ENCODE measurements at regions of chr6 and their contacts with region 1.

Region 1: GRCh38 chr6:159042003-159042825 is 2.6 kb downstream of the TAGAP start:
- DNase-seq: peak; percentile 84
- ATAC-seq: peak; percentile 39
- H3K4me3 Mint-ChIP-seq: peak overlapping the region; percentile 87
- H3K27ac Mint-ChIP-seq: peak overlapping the region; percentile 97
- H3K4me1 Mint-ChIP-seq: peaks cover 71% of the 10 kb centered on the region
- H3K27me3 Mint-ChIP-seq: no peaks in the 10 kb centered on the region

Region 2: GRCh38 chr6:158686311-158686710 is 355.9 kb before region 1 on chr6:
- CTCF ChIA-PET with region 1: no interaction called
- POLR2A ChIA-PET with region 1: no interaction called
- intact Hi-C with region 1: no loop called
- DNase-seq: no peak
- ATAC-seq: no peak
- H3K4me3 Mint-ChIP-seq: no peak overlapping the region
- H3K27ac Mint-ChIP-seq: peak overlapping the region; percentile 42
- H3K4me1 Mint-ChIP-seq: peaks cover 47% of the 10 kb centered on the region
- H3K27me3 Mint-ChIP-seq: no peaks in the 10 kb centered on the region

Region 3: GRCh38 chr6:158819213-158819909 is 222.9 kb before region 1 on chr6 and contains the start of gene EZR:
- CTCF ChIA-PET with region 1: interaction called, 3 read pairs
- POLR2A ChIA-PET with region 1: no interaction called
- intact Hi-C with region 1: loop called in 1 of 2 experiments (anchors 1 kb)
- DNase-seq: peak; percentile 91
- ATAC-seq: peak; percentile 52
- H3K4me3 Mint-ChIP-seq: peak within 1 kb of the TSS; percentile 93
- H3K27ac Mint-ChIP-seq: peak within 1 kb of the TSS; percentile 87
- H3K4me1 Mint-ChIP-seq: peaks cover 38% of the 10 kb centered on the region
- H3K27me3 Mint-ChIP-seq: no peaks in the 10 kb centered on the region
- total RNA-seq, gene EZR: 197 to 203 TPM

Region 4: DNA sequence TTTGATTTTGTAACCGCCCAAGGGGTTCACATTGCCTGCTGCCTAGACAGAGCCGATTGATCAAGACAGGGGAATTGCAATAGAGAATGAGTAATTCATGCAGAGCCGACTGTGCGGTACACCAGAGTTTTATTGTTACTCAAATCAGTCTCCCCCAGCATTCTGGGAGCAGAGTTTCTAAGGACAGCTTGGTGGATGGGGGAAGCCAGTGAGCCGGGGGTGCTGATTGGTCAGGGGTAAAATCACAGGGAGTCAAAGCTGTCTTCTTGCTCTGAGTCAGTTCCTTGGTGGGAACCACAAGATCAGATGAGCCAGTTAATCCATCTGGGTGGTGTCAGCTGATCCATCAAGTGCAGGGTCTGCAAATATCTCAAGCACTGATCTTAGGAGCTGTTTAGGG is 163.0 kb before region 1 on chr6:
- CTCF ChIA-PET with region 1: no interaction called
- POLR2A ChIA-PET with region 1: no interaction called
- intact Hi-C with region 1: no loop called
- DNase-seq: peak; percentile 85
- ATAC-seq: peak; percentile 97
- H3K4me3 Mint-ChIP-seq: no peak overlapping the region
- H3K27ac Mint-ChIP-seq: peak overlapping the region; percentile 71
- H3K4me1 Mint-ChIP-seq: peaks cover 18% of the 10 kb centered on the region
- H3K27me3 Mint-ChIP-seq: no peaks in the 10 kb centered on the region

Region 5: GRCh38 chr6:159008656-159009288 is 33.4 kb before region 1 on chr6:
- CTCF ChIA-PET with region 1: interaction called, 29 read pairs
- POLR2A ChIA-PET with region 1: interaction called, 3 read pairs
- intact Hi-C with region 1: loop called in 1 of 2 experiments (anchors 2 kb)
- DNase-seq: no peak
- ATAC-seq: peak; percentile 74
- H3K4me3 Mint-ChIP-seq: peak overlapping the region; percentile 7
- H3K27ac Mint-ChIP-seq: no peak overlapping the region
- H3K4me1 Mint-ChIP-seq: peaks cover 36% of the 10 kb centered on the region
- H3K27me3 Mint-ChIP-seq: no peaks in the 10 kb centered on the region

Region 6: DNA sequence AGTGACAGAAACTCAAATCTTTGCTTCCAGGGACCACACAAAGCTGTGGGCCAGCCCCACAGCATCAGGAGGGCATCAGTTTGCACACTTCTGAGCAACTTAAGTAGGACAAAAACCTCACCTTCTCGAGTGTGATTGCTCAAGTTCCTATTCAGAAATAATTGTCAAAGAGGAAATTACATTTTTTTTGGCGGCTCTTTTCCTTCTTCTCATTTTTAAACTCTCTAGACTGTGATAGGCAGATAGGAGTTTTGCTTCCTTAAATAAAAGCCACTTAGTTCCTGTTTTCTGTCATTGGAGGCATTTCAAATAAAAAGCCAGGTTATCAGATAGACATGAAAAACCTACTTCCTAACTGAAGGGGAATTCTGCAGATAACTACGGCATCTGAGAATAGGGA is 13.8 kb after region 1 on chr6:
- CTCF ChIA-PET with region 1: interaction called, 23 read pairs
- POLR2A ChIA-PET with region 1: interaction called, 11 read pairs
- intact Hi-C with region 1: loop called (anchors 1 to 2 kb)
- DNase-seq: no peak
- ATAC-seq: no peak
- H3K4me3 Mint-ChIP-seq: peak overlapping the region; percentile 13
- H3K27ac Mint-ChIP-seq: peak overlapping the region; percentile 89
- H3K4me1 Mint-ChIP-seq: peaks cover 67% of the 10 kb centered on the region
- H3K27me3 Mint-ChIP-seq: no peaks in the 10 kb centered on the region

Region 7: DNA sequence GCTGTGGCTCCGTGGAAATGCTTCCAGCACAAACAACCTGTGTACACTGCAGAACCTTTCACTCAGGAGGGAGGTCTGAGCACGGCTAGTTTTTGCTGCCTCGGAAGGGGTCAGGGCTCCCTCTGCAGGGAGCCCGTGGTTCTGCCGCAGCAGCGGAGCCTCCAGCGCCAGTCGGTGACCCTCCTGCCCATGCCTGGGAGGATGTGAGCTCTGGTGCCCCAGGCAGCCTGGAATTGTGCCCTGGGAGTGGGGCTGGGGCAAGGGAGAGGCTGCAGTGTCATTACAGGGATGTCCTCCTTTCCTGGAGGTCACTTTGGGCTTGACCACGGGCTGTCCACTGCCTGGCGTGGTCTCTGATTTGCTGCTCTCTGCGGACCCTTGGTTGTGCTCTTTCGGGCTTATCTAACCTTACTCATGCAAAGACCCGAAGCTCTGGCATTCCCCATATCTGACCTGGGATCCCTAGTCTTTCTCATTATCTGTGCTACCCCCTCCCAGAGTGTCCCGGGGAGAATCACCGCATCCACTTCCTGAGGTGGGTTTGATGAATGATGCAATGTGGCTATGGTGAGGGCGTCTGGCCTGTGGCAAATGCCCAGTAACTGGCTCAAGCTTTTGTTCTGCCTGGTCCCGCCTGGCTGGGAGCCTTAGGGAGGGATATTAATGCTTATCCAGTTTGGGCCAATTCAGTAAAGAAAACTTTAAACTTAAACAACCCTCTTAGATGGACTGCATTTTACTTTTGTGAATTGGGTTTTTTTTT is 62.1 kb after region 1 on chr6:
- CTCF ChIA-PET with region 1: interaction called, 330 read pairs
- POLR2A ChIA-PET with region 1: interaction called, 9 read pairs
- intact Hi-C with region 1: loop called (anchors 1 kb)
- DNase-seq: peak; percentile 89
- ATAC-seq: peak; percentile 72
- H3K4me3 Mint-ChIP-seq: peak overlapping the region; percentile 10
- H3K27ac Mint-ChIP-seq: peak overlapping the region; percentile 87
- H3K4me1 Mint-ChIP-seq: peaks cover 79% of the 10 kb centered on the region
- H3K27me3 Mint-ChIP-seq: no peaks in the 10 kb centered on the region

Region 8: GRCh38 chr6:159233365-159234101 is 191.3 kb after region 1 on chr6:
- CTCF ChIA-PET with region 1: no interaction called
- POLR2A ChIA-PET with region 1: no interaction called
- intact Hi-C with region 1: no loop called
- DNase-seq: no peak
- ATAC-seq: no peak
- H3K4me3 Mint-ChIP-seq: no peak overlapping the region
- H3K27ac Mint-ChIP-seq: no peak overlapping the region
- H3K4me1 Mint-ChIP-seq: peaks cover 2% of the 10 kb centered on the region
- H3K27me3 Mint-ChIP-seq: peaks cover 32% of the 10 kb centered on the region

Region 9: GRCh38 chr6:159789377-159790148 is 747.3 kb after region 1 on chr6 and contains the start of gene TCP1:
- CTCF ChIA-PET with region 1: no interaction called
- POLR2A ChIA-PET with region 1: no interaction called
- intact Hi-C with region 1: loop called in 1 of 2 experiments (anchors 2 kb)
- DNase-seq: peak; percentile 100
- ATAC-seq: peak; percentile 89
- H3K4me3 Mint-ChIP-seq: peak within 1 kb of the TSS; percentile 86
- H3K27ac Mint-ChIP-seq: peak within 1 kb of the TSS; percentile 99
- H3K4me1 Mint-ChIP-seq: peaks cover 62% of the 10 kb centered on the region
- H3K27me3 Mint-ChIP-seq: no peaks in the 10 kb centered on the region
- total RNA-seq, gene TCP1: 358 to 496 TPM

Measured in activated CD4-positive, alpha-beta T cell treated with anti-CD3 and anti-CD28 coated beads for 36 hours (primary cell).